PC-9 (cell line): ENCODE measurements at regions of chr6 and their contacts with region 1.

Region 1: GRCh38 chr6:153537422-153537821 is 406.3 kb upstream of the RGS17 start:
- DNase-seq: no peak
- H3K4me3 ChIP-seq: no peak overlapping the region
- H3K27ac ChIP-seq: no peak overlapping the region
- H3K4me1 ChIP-seq: no peaks in the 10 kb centered on the region
- H3K27me3 ChIP-seq: no peaks in the 10 kb centered on the region
- CTCF ChIP-seq: no peak

Region 2: GRCh38 chr6:153511896-153512496 is 25.4 kb before region 1 on chr6:
- CTCF ChIA-PET with region 1: interaction called, 15 read pairs
- POLR2A ChIA-PET with region 1: no interaction called
- intact Hi-C with region 1: no loop called
- DNase-seq: no peak
- H3K4me3 ChIP-seq: no peak overlapping the region
- H3K27ac ChIP-seq: no peak overlapping the region
- H3K4me1 ChIP-seq: no peaks in the 10 kb centered on the region
- H3K27me3 ChIP-seq: no peaks in the 10 kb centered on the region
- CTCF ChIP-seq: peak; percentile 74